Activated naive CD8-positive, alpha-beta T cell treated with anti-CD3 and anti-CD28 coated beads, Interleukin-2, amount 10 ng/mL, durations not matched to agents 7 days and 5 days (primary cell): ENCODE measurements at regions of chr2 and their contacts with region 1.

Region 1: DNA sequence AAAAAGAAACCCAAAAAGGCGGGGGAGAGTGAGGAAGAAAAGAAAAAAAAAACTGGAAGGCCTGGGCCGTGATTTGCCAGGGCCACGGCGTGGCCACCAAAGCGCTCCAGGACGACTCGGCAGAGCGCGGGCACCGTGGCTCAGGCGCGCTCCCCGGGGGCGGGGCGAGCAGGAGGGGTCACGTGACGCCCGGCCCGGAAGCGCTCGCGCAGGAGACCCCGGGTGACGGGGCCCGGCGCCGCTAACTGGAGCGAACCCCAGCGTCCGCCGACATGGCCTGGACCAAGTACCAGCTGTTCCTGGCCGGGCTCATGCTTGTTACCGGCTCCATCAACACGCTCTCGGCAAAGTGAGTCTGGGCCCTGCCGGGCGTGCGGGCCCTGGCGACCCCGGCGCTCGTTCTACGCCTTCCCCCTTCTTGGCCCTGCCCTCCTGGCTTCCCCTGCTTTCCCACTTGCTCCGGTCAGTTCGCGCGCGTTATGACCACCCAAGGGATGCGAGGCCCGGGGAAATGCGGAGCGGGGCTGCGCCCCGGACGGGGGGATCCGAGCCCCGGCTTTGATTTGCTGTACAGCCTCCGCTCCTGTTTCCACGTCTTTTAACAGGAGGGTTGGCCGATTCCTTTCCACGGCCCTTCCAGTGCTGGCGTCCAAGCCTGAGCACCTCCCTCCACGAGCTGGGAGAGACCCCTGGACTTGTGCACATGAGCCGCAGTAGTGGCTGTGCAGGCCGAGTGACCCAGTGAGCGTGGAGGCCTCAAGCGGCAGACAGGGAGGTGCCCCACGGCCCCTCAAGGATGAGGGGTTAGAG is at the start of gene SLC35F6:
- DNase-seq: peak; percentile 95
- ATAC-seq: peak; percentile 88
- H3K4me3 Mint-ChIP-seq: peak within 1 kb of the TSS; percentile 95
- H3K27ac Mint-ChIP-seq: peak within 1 kb of the TSS; percentile 90
- H3K4me1 Mint-ChIP-seq: peaks cover 32% of the 10 kb centered on the region
- H3K27me3 Mint-ChIP-seq: peaks cover 5% of the 10 kb centered on the region
- total RNA-seq, gene SLC35F6: 19.5 to 19.7 TPM

Region 2: GRCh38 chr2:26785431-26786206 is 21.3 kb after region 1 on chr2 and contains the start of gene CENPA:
- POLR2A ChIA-PET with region 1: interaction called, 10 read pairs
- DNase-seq: peak; percentile 92
- ATAC-seq: peak; percentile 100
- H3K4me3 Mint-ChIP-seq: peak within 1 kb of the TSS; percentile 95
- H3K27ac Mint-ChIP-seq: peak within 1 kb of the TSS; percentile 86
- H3K4me1 Mint-ChIP-seq: peaks cover 30% of the 10 kb centered on the region
- H3K27me3 Mint-ChIP-seq: no peaks in the 10 kb centered on the region
- total RNA-seq, gene CENPA: 30.5 to 34.4 TPM